MCF 10A (cell line): ENCODE measurements at regions of chr19 and their contacts with region 1.

Region 1: GRCh38 chr19:41746593-41747227 is 8.6 kb upstream of the CEACAM6 start:
- DNase-seq: peak; percentile 66
- H3K4me3 Mint-ChIP-seq: no peak overlapping the region
- H3K27ac Mint-ChIP-seq: no peak overlapping the region
- H3K4me1 Mint-ChIP-seq: no peaks in the 10 kb centered on the region
- H3K27me3 Mint-ChIP-seq: peaks cover 79% of the 10 kb centered on the region
- CTCF ChIP-seq: peak; percentile 69

Region 2: DNA sequence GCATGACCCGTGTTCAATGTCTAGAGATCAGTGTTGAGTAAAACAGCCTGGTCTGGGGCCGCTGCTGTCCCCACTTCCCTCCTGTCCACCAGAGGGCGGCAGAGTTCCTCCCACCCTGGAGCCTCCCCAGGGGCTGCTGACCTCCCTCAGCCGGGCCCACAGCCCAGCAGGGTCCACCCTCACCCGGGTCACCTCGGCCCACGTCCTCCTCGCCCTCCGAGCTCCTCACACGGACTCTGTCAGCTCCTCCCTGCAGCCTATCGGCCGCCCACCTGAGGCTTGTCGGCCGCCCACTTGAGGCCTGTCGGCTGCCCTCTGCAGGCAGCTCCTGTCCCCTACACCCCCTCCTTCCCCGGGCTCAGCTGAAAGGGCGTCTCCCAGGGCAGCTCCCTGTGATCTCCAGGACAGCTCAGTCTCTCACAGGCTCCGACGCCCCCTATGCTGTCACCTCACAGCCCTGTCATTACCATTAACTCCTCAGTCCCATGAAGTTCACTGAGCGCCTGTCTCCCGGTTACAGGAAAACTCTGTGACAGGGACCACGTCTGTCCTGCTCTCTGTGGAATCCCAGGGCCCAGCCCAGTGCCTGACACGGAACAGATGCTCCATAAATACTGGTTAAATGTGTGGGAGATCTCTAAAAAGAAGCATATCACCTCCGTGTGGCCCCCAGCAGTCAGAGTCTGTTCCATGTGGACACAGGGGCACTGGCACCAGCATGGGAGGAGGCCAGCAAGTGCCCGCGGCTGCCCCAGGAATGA is 39.8 kb before region 1 on chr19:
- CTCF ChIA-PET with region 1: interaction called, 4 read pairs
- POLR2A ChIA-PET with region 1: no interaction called
- intact Hi-C with region 1: loop called (anchors 2 kb)
- DNase-seq: peak; percentile 62
- H3K4me3 Mint-ChIP-seq: peak overlapping the region; percentile 63
- H3K27ac Mint-ChIP-seq: no peak overlapping the region
- H3K4me1 Mint-ChIP-seq: no peaks in the 10 kb centered on the region
- H3K27me3 Mint-ChIP-seq: peaks cover 93% of the 10 kb centered on the region
- CTCF ChIP-seq: peak; percentile 71